Activated naive CD4-positive, alpha-beta T cell treated with anti-CD3 and anti-CD28 coated beads for 36 hours (primary cell): ENCODE measurements at regions of chr15 and their contacts with region 1.

Region 1: GRCh38 chr15:76994971-76995945 is at the start of gene PSTPIP1:
- DNase-seq: peak; percentile 86
- H3K4me3 Mint-ChIP-seq: peak within 1 kb of the TSS; percentile 84
- H3K27ac Mint-ChIP-seq: peak within 1 kb of the TSS; percentile 98
- H3K4me1 Mint-ChIP-seq: peaks cover 58% of the 10 kb centered on the region
- H3K27me3 Mint-ChIP-seq: no peaks in the 10 kb centered on the region
- total RNA-seq, gene PSTPIP1: 94.2 to 102 TPM

Region 2: GRCh38 chr15:76931397-76932007 is 63.8 kb before region 1 on chr15 and contains the start of gene RCN2:
- CTCF ChIA-PET with region 1: no interaction called
- intact Hi-C with region 1: loop called (anchors 5 kb)
- DNase-seq: peak; percentile 95
- H3K4me3 Mint-ChIP-seq: peak within 1 kb of the TSS; percentile 90
- H3K27ac Mint-ChIP-seq: peak within 1 kb of the TSS; percentile 78
- H3K4me1 Mint-ChIP-seq: peaks cover 26% of the 10 kb centered on the region
- H3K27me3 Mint-ChIP-seq: no peaks in the 10 kb centered on the region
- total RNA-seq, gene RCN2: 23.7 to 25.2 TPM

Region 3: DNA sequence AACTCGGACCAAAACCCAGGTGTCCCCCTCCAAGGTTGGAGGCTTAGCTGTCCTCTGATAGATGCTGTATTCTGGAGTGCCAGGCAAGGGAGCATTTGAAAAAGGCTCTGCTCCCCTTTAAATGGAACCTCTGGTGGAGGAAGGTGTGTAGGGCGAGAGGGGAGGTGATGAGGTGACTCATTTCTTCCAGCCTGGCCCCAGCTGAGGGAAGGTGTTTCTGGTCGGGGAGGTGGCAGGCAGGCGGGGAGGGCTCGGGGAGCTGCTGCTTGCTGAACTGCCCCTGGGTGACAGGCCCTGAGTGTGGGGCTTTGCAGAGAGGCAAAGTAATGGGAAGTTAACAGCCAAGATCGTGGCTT is 18.5 kb after region 1 on chr15:
- CTCF ChIA-PET with region 1: interaction called, 12 read pairs
- intact Hi-C with region 1: loop called (anchors 1 kb)
- DNase-seq: peak; percentile 97
- H3K4me3 Mint-ChIP-seq: peak overlapping the region; percentile 61
- H3K27ac Mint-ChIP-seq: peak overlapping the region; percentile 89
- H3K4me1 Mint-ChIP-seq: peaks cover 92% of the 10 kb centered on the region
- H3K27me3 Mint-ChIP-seq: no peaks in the 10 kb centered on the region

Region 4: GRCh38 chr15:77059786-77060361 is 64.6 kb after region 1 on chr15:
- CTCF ChIA-PET with region 1: no interaction called
- intact Hi-C with region 1: no loop called
- DNase-seq: peak; percentile 30
- H3K4me3 Mint-ChIP-seq: no peak overlapping the region
- H3K27ac Mint-ChIP-seq: no peak overlapping the region
- H3K4me1 Mint-ChIP-seq: peaks cover 34% of the 10 kb centered on the region
- H3K27me3 Mint-ChIP-seq: no peaks in the 10 kb centered on the region

Region 5: DNA sequence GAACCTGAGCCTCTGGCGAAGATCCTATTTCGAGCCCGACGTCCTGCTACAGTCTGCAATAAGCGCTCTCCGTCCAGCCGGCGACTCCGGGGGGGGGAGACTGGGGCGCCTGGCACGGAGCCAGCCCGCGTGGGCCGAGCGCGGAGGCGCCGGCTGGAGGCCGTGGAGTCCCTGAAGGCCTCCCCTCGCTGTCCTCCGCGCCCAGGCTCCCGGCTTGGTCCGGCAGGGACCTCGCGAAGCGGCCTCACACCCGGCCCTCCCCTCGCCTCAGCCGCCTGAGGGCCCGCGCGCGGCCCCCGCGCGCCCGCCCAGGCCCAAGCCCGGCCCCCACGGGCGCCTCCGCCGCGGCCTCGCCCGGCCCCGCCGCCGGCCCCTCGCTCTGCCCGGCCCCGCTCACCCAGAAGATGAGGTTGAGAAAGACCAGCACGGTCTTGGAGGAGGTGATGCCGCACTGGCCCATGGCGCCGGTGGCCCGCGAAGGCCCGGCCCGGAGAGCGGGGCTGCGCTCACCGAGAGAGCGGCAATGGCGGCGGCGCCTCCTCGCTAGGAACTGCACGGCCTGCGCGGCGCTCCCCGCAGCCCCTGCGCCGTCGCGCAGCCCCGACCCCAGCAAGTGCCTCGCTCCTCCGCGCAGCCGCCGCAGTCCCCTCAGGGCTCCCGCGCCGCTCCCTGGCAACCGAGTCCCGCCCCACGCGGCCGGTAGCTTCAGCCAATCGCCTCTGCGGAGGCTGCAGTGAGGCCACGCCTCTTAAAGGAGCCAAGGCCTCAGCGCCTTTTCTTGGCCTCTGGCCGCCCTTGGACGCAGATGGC is 75.4 kb after region 1 on chr15 and contains the start of gene TSPAN3:
- CTCF ChIA-PET with region 1: no interaction called
- intact Hi-C with region 1: loop called (anchors 2 kb)
- DNase-seq: peak; percentile 93
- H3K4me3 Mint-ChIP-seq: peak within 1 kb of the TSS; percentile 77
- H3K27ac Mint-ChIP-seq: peak within 1 kb of the TSS; percentile 71
- H3K4me1 Mint-ChIP-seq: peaks cover 35% of the 10 kb centered on the region
- H3K27me3 Mint-ChIP-seq: no peaks in the 10 kb centered on the region
- total RNA-seq, gene TSPAN3: 21.9 to 24.9 TPM

Region 6: DNA sequence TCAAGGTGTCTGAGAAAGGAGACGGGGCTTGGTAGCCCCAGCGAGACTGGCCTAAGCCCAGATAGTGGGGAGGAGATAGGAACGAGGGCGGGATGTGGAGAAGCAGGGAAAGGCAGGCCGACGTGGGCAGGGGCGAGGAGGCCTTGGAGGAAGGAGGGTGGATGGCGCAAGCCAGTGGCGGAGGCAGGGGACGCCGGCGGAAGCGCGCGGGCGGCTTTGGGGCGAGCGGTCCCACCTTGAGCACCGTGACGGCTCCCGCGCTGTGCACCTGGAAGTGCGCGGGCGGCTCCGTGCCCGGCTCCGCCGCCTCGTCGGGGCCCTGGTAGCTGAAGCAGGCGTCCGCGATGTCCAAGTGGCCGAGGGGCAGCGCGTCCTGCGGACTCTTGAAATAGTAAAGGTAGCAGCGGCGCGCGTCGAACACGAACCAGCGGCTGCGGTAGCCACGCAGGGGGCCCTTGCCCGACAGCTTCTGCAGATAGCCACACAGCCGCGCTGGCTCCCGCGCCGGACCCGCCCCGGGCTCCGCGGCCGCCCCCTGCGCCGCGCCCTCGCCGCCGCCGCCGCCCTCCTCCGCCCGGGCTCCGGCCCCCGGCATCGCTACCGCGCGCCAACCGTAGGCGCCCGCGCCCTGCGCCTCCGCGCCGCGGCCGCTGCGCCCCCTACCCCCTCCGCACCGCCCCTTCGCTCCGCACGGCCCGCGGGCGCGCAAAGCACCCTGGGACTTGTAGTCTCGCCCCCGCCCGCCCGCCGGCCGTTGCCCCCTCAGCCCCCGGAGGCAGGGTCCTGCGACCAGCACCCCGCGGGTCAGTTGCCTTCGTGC is 1082.0 kb after region 1 on chr15 and contains the start of gene TBC1D2B:
- CTCF ChIA-PET with region 1: no interaction called
- intact Hi-C with region 1: loop called (anchors 10 kb)
- DNase-seq: peak; percentile 74
- H3K4me3 Mint-ChIP-seq: peak within 1 kb of the TSS; percentile 100
- H3K27ac Mint-ChIP-seq: peak within 1 kb of the TSS; percentile 95
- H3K4me1 Mint-ChIP-seq: peaks cover 39% of the 10 kb centered on the region
- H3K27me3 Mint-ChIP-seq: no peaks in the 10 kb centered on the region
- total RNA-seq, gene TBC1D2B: 57.1 to 60.3 TPM